HCT116 (cell line): ENCODE measurements at regions of chr5 and their contacts with region 1.

Region 1: GRCh38 chr5:159133041-159133741 is 33.5 kb upstream of the EBF1 start:
- DNase-seq: peak; percentile 44
- ATAC-seq: peak; percentile 77
- H3K4me3 ChIP-seq: no peak overlapping the region
- H3K27ac ChIP-seq: no peak overlapping the region
- H3K4me1 ChIP-seq: no peaks in the 10 kb centered on the region
- H3K27me3 ChIP-seq: peaks cover 46% of the 10 kb centered on the region
- CTCF ChIP-seq: peak; percentile 53 to 79 (median 66); a peak in 5 of 6 replicates
- POLR2A ChIP-seq: no peak
- RAD21 ChIP-seq: peak; percentile 90

Region 2: DNA sequence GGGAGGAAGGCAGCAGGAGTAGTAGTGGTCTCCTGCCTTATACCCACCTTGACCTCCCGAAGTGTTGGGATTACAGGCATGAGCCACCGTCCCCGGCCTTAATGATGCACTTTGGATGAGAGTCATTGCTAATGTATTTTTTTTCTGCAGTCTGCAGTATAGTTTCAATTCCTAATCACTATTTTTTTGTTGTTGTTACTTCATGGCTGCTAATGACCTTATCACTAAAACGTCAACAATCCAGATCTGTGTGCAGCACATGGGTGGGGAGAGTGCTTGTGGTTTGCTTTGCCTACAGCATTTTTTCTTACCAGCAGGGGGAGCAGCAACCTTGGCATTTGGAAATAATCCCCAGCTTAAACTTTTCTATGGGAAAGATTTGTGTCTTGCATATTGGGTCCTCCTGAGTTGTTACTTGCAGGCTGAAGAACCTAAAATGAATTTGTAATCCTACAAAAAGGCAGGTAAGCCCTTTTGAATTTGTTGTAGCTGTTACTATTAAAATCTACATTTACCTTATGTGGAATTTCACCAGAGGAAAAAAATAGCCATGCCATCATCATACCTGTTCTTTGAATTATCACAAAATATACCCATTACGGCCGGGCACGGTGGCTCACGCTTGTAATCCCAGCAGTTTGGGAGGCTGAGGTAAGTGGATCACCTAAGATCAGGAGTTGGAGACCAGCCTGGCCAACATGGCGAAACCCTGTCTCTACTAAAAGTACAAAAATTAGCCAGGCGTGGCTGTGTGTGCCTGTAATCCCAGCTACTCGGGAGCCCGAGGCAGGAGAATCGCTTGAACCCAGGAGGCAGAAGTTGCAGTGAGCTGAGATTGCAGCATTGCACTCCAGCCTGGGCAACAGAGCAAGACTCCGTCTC is 1984.2 kb before region 1 on chr5:
- CTCF ChIA-PET with region 1: no interaction called
- POLR2A ChIA-PET with region 1: no interaction called
- RAD21 ChIA-PET with region 1: no interaction called
- intact Hi-C with region 1: loop called (anchors 5 kb)
- DNase-seq: peak; percentile 61
- ATAC-seq: peak; percentile 95
- H3K4me3 ChIP-seq: no peak overlapping the region
- H3K27ac ChIP-seq: no peak overlapping the region
- H3K4me1 ChIP-seq: no peaks in the 10 kb centered on the region
- H3K27me3 ChIP-seq: no peaks in the 10 kb centered on the region
- CTCF ChIP-seq: peak; percentile 77 to 86 (median 86)
- POLR2A ChIP-seq: no peak
- RAD21 ChIP-seq: peak; percentile 82

Region 3: GRCh38 chr5:157342822-157343402 is 1790.3 kb before region 1 on chr5:
- CTCF ChIA-PET with region 1: no interaction called
- POLR2A ChIA-PET with region 1: no interaction called
- RAD21 ChIA-PET with region 1: no interaction called
- intact Hi-C with region 1: loop called (anchors 10 kb)
- DNase-seq: peak; percentile 23
- ATAC-seq: peak; percentile 96
- H3K4me3 ChIP-seq: no peak overlapping the region
- H3K27ac ChIP-seq: no peak overlapping the region
- H3K4me1 ChIP-seq: no peaks in the 10 kb centered on the region
- H3K27me3 ChIP-seq: no peaks in the 10 kb centered on the region
- CTCF ChIP-seq: peak; percentile 66 to 85 (median 80); a peak in 5 of 6 replicates
- POLR2A ChIP-seq: no peak
- RAD21 ChIP-seq: peak; percentile 64

Region 4: GRCh38 chr5:158174918-158175851 is 958.0 kb before region 1 on chr5:
- CTCF ChIA-PET with region 1: interaction called, 5 read pairs
- POLR2A ChIA-PET with region 1: no interaction called
- RAD21 ChIA-PET with region 1: no interaction called
- intact Hi-C with region 1: loop called (anchors 2 kb)
- DNase-seq: peak; percentile 24
- ATAC-seq: peak; percentile 93
- H3K4me3 ChIP-seq: no peak overlapping the region
- H3K27ac ChIP-seq: no peak overlapping the region
- H3K4me1 ChIP-seq: no peaks in the 10 kb centered on the region
- H3K27me3 ChIP-seq: peaks cover 53% of the 10 kb centered on the region; the same call in 1 of the 2 replicates
- CTCF ChIP-seq: peak; percentile 58 to 87 (median 77)
- POLR2A ChIP-seq: no peak
- RAD21 ChIP-seq: peak; percentile 88

Region 5: GRCh38 chr5:158695595-158696330 is 437.4 kb before region 1 on chr5:
- CTCF ChIA-PET with region 1: interaction called, 10 read pairs
- POLR2A ChIA-PET with region 1: no interaction called
- RAD21 ChIA-PET with region 1: no interaction called
- intact Hi-C with region 1: loop called (anchors 1 kb)
- DNase-seq: peak; percentile 45
- ATAC-seq: peak; percentile 95
- H3K4me3 ChIP-seq: no peak overlapping the region
- H3K27ac ChIP-seq: no peak overlapping the region
- H3K4me1 ChIP-seq: no peaks in the 10 kb centered on the region
- H3K27me3 ChIP-seq: peaks cover 41% of the 10 kb centered on the region; the same call in 1 of the 2 replicates
- CTCF ChIP-seq: peak; percentile 62 to 97 (median 94)
- POLR2A ChIP-seq: no peak
- RAD21 ChIP-seq: peak; percentile 85

Region 6: GRCh38 chr5:159073026-159073425 is 60.2 kb before region 1 on chr5:
- CTCF ChIA-PET with region 1: no interaction called
- POLR2A ChIA-PET with region 1: no interaction called
- RAD21 ChIA-PET with region 1: no interaction called
- intact Hi-C with region 1: no loop called
- DNase-seq: no peak
- ATAC-seq: no peak
- H3K4me3 ChIP-seq: no peak overlapping the region
- H3K27ac ChIP-seq: no peak overlapping the region
- H3K4me1 ChIP-seq: no peaks in the 10 kb centered on the region
- H3K27me3 ChIP-seq: peaks cover 95% of the 10 kb centered on the region
- CTCF ChIP-seq: no peak
- POLR2A ChIP-seq: no peak
- RAD21 ChIP-seq: no peak

Region 7: DNA sequence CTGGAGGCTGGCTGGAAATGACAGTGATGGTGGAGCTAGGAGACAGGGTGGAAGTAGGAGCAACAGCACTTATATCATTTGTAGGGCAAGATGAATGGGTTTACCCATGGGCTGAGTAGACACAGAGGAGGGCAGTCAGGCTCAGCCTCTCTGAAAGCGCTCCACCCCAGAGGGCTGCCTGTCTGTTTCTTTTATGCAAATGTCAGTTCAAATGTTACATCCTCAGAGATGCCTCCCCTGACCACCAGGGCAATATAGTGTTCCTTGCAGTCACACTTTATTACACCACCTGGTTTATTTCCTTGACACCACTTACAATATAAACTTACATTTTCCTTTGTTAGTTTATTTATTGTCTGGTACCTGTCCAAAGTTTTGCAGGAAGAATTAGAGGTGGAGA is 356.6 kb after region 1 on chr5:
- CTCF ChIA-PET with region 1: no interaction called
- POLR2A ChIA-PET with region 1: no interaction called
- RAD21 ChIA-PET with region 1: no interaction called
- intact Hi-C with region 1: no loop called
- DNase-seq: no peak
- ATAC-seq: peak; percentile 50; the same call in 1 of the 2 replicates
- H3K4me3 ChIP-seq: no peak overlapping the region
- H3K27ac ChIP-seq: no peak overlapping the region
- H3K4me1 ChIP-seq: no peaks in the 10 kb centered on the region
- H3K27me3 ChIP-seq: no peaks in the 10 kb centered on the region
- CTCF ChIP-seq: no peak
- POLR2A ChIP-seq: no peak
- RAD21 ChIP-seq: no peak